CD8-positive, alpha-beta T cell (primary cell): ENCODE measurements at regions of chr15 and their contacts with region 1.

Region 1: DNA sequence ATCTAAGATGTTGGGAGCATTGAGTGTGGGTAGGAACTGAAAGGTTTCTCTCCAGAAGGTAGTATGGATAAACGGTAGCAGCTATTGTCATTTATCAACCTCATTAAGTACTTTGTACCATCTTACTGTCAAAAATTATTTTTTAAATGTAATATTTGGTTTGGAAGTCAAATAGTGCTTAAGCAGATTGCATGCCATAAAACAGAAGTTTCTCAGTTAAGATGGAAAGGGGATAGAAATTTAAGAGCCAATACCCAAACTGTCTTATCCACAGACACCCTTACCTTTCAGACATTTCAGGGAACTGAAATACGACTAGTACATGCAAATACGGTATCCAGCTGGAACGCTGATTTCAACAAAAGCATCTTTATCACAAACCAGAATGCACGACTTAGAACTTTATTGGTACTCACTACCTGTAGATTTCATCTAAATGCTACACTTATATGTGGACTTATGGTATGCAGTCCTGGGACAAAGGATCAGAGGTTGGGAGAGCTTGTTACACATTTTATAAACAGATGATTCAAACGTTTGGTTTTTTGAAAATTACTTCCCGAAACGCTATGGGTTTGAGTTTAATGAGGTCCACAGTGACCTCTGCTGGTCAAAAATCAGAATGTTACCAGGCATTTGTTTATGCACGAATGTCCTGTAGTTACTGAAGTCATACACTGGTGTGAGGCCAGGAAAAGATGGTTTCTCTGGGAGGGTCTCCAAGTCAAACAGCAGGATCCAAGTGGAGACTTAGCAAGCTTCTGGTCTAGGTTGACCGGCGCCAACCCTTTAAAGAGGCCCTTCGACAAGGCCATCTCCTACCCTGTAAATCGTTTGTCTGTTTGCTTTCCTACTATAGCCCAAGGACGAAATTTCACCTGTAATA is 45.7 kb upstream of the DUT start:
- DNase-seq: peak in 6 of 9 experiments; percentile 3 to 66 (median 30)
- ATAC-seq: peak; percentile 51
- H3K4me3 ChIP-seq: no peak overlapping the region
- H3K4me3 Mint-ChIP-seq: no peak overlapping the region
- H3K27ac ChIP-seq: no peak overlapping the region
- H3K27ac Mint-ChIP-seq: no peak overlapping the region
- H3K4me1 ChIP-seq: no peaks in the 10 kb centered on the region
- H3K4me1 Mint-ChIP-seq: peaks cover 9% of the 10 kb centered on the region
- H3K27me3 ChIP-seq: no peaks in the 10 kb centered on the region
- H3K27me3 Mint-ChIP-seq: peaks cover 8% of the 10 kb centered on the region
- CTCF ChIP-seq: peak; percentile 81

Region 2: DNA sequence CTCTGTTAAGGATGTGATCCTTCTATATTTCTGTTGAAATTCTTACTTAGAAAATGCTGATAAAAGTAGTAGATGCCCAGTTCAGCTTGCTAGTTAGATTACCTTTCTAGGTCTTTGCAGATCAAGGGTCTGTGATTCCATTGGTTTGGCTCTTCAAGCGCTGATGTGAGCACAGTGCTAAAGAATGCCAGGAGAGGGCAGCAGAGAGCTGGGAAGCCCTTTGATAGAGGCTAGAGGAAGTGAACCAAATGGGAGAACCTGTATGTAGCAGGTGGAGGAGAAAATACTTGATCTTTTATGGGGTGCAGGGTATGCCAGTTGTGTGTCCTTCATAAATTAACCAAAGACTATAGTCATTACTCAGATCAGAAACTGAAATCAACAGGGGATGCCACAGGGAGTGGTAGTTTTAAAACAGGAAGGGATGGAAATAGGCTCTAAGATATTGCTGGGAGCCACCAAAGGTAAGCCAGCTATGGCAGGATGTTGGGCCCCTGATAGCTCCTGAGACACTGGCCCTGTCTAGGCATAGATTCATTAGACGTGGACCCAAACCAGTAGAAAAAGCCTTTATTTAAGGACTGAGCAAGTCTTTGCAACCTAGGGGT is 1973.3 kb before region 1 on chr15:
- CTCF ChIA-PET with region 1: interaction called, 5 read pairs
- POLR2A ChIA-PET with region 1: no interaction called
- intact Hi-C with region 1: loop called in 1 of 2 experiments (anchors 5 kb)
- DNase-seq: peak in 7 of 9 experiments; percentile 15 to 61 (median 46)
- ATAC-seq: peak; percentile 57
- H3K4me3 ChIP-seq: no peak overlapping the region
- H3K4me3 Mint-ChIP-seq: no peak overlapping the region
- H3K27ac ChIP-seq: no peak overlapping the region
- H3K27ac Mint-ChIP-seq: no peak overlapping the region
- H3K4me1 ChIP-seq: no peaks in the 10 kb centered on the region
- H3K4me1 Mint-ChIP-seq: no peaks in the 10 kb centered on the region
- H3K27me3 ChIP-seq: no peaks in the 10 kb centered on the region
- H3K27me3 Mint-ChIP-seq: no peaks in the 10 kb centered on the region
- CTCF ChIP-seq: peak; percentile 65

Region 3: GRCh38 chr15:47473832-47474231 is 811.7 kb before region 1 on chr15:
- CTCF ChIA-PET with region 1: no interaction called
- POLR2A ChIA-PET with region 1: no interaction called
- intact Hi-C with region 1: loop called in 1 of 2 experiments (anchors 5 kb)
- DNase-seq: no peak
- ATAC-seq: no peak
- H3K4me3 ChIP-seq: no peak overlapping the region
- H3K4me3 Mint-ChIP-seq: no peak overlapping the region
- H3K27ac ChIP-seq: no peak overlapping the region
- H3K27ac Mint-ChIP-seq: no peak overlapping the region
- H3K4me1 ChIP-seq: no peaks in the 10 kb centered on the region
- H3K4me1 Mint-ChIP-seq: no peaks in the 10 kb centered on the region
- H3K27me3 ChIP-seq: peaks cover 0 to under 1% of the 10 kb centered on the region in 2 experiments
- H3K27me3 Mint-ChIP-seq: no peaks in the 10 kb centered on the region
- CTCF ChIP-seq: no peak

Region 4: GRCh38 chr15:48112242-48112641 is 173.3 kb before region 1 on chr15:
- CTCF ChIA-PET with region 1: interaction called, 3 read pairs
- POLR2A ChIA-PET with region 1: no interaction called
- intact Hi-C with region 1: loop called in 1 of 2 experiments (anchors 5 kb)
- DNase-seq: peak in 1 of 9 experiments; percentile 1
- ATAC-seq: no peak
- H3K4me3 ChIP-seq: no peak overlapping the region
- H3K4me3 Mint-ChIP-seq: no peak overlapping the region
- H3K27ac ChIP-seq: no peak overlapping the region
- H3K27ac Mint-ChIP-seq: no peak overlapping the region
- H3K4me1 ChIP-seq: no peaks in the 10 kb centered on the region
- H3K4me1 Mint-ChIP-seq: no peaks in the 10 kb centered on the region
- H3K27me3 ChIP-seq: no peaks in the 10 kb centered on the region
- H3K27me3 Mint-ChIP-seq: peaks cover 22% of the 10 kb centered on the region
- CTCF ChIP-seq: no peak

Region 5: DNA sequence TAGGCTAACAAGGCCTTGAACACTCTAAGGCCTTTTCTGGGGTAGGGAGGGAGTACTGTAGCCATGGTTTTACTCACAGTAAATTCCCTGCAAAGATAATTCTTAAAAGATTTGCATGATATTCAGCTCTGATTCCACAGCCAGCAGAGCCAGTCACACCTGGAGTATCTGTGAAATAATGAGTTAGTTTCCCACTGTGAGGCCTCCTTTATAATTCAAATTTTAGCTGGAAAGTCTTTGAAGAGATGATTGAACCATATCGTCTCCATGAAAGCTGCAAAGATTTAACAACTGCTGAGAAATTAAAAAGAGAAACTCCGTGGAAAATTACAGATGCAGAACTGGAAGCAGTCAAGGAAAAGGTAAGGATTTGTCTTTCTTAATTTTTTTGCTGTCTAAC is 13.3 kb after region 1 on chr15:
- CTCF ChIA-PET with region 1: interaction called, 15 read pairs
- POLR2A ChIA-PET with region 1: no interaction called
- intact Hi-C with region 1: no loop called
- DNase-seq: no peak
- ATAC-seq: no peak
- H3K4me3 ChIP-seq: no peak overlapping the region
- H3K4me3 Mint-ChIP-seq: no peak overlapping the region
- H3K27ac ChIP-seq: no peak overlapping the region
- H3K27ac Mint-ChIP-seq: no peak overlapping the region
- H3K4me1 ChIP-seq: no peaks in the 10 kb centered on the region
- H3K4me1 Mint-ChIP-seq: no peaks in the 10 kb centered on the region
- H3K27me3 ChIP-seq: no peaks in the 10 kb centered on the region
- H3K27me3 Mint-ChIP-seq: peaks cover 4% of the 10 kb centered on the region
- CTCF ChIP-seq: no peak